Activated CD4-positive, alpha-beta T cell treated with anti-CD3 and anti-CD28 coated beads, Interleukin-2, amount 10 ng/mL, durations not matched to agents 24 days and 14 days (primary cell): ENCODE measurements at regions of chr5 and their contacts with region 1.

Region 1: GRCh38 chr5:1523771-1524480 is at the start of gene LPCAT1:
- DNase-seq: peak; percentile 95
- H3K4me3 Mint-ChIP-seq: peak within 1 kb of the TSS; percentile 89
- H3K27ac Mint-ChIP-seq: peak within 1 kb of the TSS; percentile 70
- H3K4me1 Mint-ChIP-seq: peaks cover 18% of the 10 kb centered on the region
- H3K27me3 Mint-ChIP-seq: peaks cover 5% of the 10 kb centered on the region
- total RNA-seq, gene LPCAT1: 93.2 and 95.6 TPM in 2 replicates

Region 2: GRCh38 chr5:1385395-1386273 is 138.3 kb before region 1 on chr5:
- intact Hi-C with region 1: loop called (anchors 5 kb)
- DNase-seq: peak; percentile 97
- H3K4me3 Mint-ChIP-seq: peak overlapping the region; percentile 97
- H3K27ac Mint-ChIP-seq: peak overlapping the region; percentile 97
- H3K4me1 Mint-ChIP-seq: peaks cover 14% of the 10 kb centered on the region
- H3K27me3 Mint-ChIP-seq: peaks cover 21% of the 10 kb centered on the region

Region 3: GRCh38 chr5:1799602-1800471 is 275.9 kb after region 1 on chr5 and contains the start of gene MRPL36:
- intact Hi-C with region 1: loop called (anchors 10 kb)
- DNase-seq: peak; percentile 97
- H3K4me3 Mint-ChIP-seq: peak within 1 kb of the TSS; percentile 90
- H3K27ac Mint-ChIP-seq: peak within 1 kb of the TSS; percentile 93
- H3K4me1 Mint-ChIP-seq: peaks cover 49% of the 10 kb centered on the region
- H3K27me3 Mint-ChIP-seq: no peaks in the 10 kb centered on the region
- total RNA-seq, gene MRPL36: 107 and 108 TPM in 2 replicates